IMR-90 (cell line): ENCODE measurements at regions of chr3 and their contacts with region 1.

Region 1: GRCh38 chr3:186540221-186540834 is 3.9 kb downstream of the CRYGS start:
- DNase-seq: peak; percentile 75
- ATAC-seq: peak; percentile 80
- H3K4me3 ChIP-seq: no peak overlapping the region
- H3K27ac ChIP-seq: no peak overlapping the region
- H3K4me1 ChIP-seq: no peaks in the 10 kb centered on the region
- H3K27me3 ChIP-seq: no peaks in the 10 kb centered on the region
- CTCF ChIP-seq: peak; percentile 78
- POLR2A ChIP-seq: 0 out of 2 replicates have a peak, but pooled peaks have one; percentile 33
- RAD21 ChIP-seq: peak; percentile 85

Region 2: DNA sequence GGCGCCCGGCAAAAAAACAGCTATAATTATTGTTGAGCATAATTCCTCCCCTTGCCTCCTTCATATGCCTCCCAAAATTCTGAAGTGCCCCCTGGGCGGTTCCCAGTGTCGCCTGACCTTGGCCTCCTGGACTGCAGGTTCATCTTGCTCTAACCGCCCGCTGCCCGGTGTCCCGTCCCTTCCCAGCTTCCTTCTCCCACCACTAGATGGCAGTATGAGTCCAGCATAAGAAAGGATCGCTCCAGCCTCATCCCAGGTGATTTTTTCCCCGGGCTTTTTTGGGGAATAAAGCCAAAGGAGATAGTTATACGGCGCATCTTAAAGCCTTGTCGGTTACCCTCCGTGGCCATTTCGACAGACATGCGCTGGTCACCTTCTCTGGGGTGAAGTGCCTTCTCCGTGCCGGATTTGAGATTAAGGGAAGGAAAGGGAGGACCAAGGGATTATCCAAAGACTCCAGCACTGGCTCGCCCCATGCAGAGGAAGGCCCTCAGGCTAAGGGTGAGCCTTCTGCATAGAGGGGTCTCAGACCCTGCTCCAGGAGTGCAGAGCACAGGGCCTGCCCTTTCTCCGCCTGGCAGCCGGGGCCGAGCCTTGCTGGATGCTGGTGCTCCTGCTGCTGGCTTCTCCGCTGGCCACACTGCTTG is 556.7 kb before region 1 on chr3:
- CTCF ChIA-PET with region 1: interaction called, 7 read pairs
- POLR2A ChIA-PET with region 1: no interaction called
- dilution Hi-C with region 1: no loop called
- in situ Hi-C with region 1: loop called (anchors 5 kb)
- intact Hi-C with region 1: loop called (anchors 1 kb)
- DNase-seq: peak; percentile 62
- ATAC-seq: peak; percentile 93
- H3K4me3 ChIP-seq: no peak overlapping the region
- H3K27ac ChIP-seq: no peak overlapping the region
- H3K4me1 ChIP-seq: 0 out of 2 replicates have a peak, but pooled peaks cover 2% of the 10 kb centered on the region
- H3K27me3 ChIP-seq: no peaks in the 10 kb centered on the region; the same call in 1 of the 2 replicates
- CTCF ChIP-seq: peak; percentile 91
- POLR2A ChIP-seq: no peak
- RAD21 ChIP-seq: peak; percentile 97

Region 3: GRCh38 chr3:186259612-186260383 is 280.5 kb before region 1 on chr3:
- CTCF ChIA-PET with region 1: interaction called, 17 read pairs
- POLR2A ChIA-PET with region 1: no interaction called
- dilution Hi-C with region 1: no loop called
- in situ Hi-C with region 1: loop called (anchors 5 kb)
- intact Hi-C with region 1: loop called (anchors 1 kb)
- DNase-seq: peak; percentile 73
- ATAC-seq: peak; percentile 99
- H3K4me3 ChIP-seq: peak overlapping the region; percentile 6; the same call in 1 of the 2 replicates
- H3K27ac ChIP-seq: no peak overlapping the region
- H3K4me1 ChIP-seq: no peaks in the 10 kb centered on the region
- H3K27me3 ChIP-seq: peaks cover 14% of the 10 kb centered on the region
- CTCF ChIP-seq: peak; percentile 79
- POLR2A ChIP-seq: no peak
- RAD21 ChIP-seq: peak; percentile 74

Region 4: GRCh38 chr3:186287711-186288110 is 252.6 kb before region 1 on chr3:
- CTCF ChIA-PET with region 1: interaction called, 12 read pairs
- POLR2A ChIA-PET with region 1: no interaction called
- dilution Hi-C with region 1: no loop called
- in situ Hi-C with region 1: no loop called
- intact Hi-C with region 1: no loop called
- DNase-seq: peak; percentile 85
- ATAC-seq: peak; percentile 81
- H3K4me3 ChIP-seq: no peak overlapping the region
- H3K27ac ChIP-seq: no peak overlapping the region
- H3K4me1 ChIP-seq: peaks cover 10% of the 10 kb centered on the region
- H3K27me3 ChIP-seq: peaks cover 7% of the 10 kb centered on the region
- CTCF ChIP-seq: no peak
- POLR2A ChIP-seq: no peak
- RAD21 ChIP-seq: no peak

Region 5: DNA sequence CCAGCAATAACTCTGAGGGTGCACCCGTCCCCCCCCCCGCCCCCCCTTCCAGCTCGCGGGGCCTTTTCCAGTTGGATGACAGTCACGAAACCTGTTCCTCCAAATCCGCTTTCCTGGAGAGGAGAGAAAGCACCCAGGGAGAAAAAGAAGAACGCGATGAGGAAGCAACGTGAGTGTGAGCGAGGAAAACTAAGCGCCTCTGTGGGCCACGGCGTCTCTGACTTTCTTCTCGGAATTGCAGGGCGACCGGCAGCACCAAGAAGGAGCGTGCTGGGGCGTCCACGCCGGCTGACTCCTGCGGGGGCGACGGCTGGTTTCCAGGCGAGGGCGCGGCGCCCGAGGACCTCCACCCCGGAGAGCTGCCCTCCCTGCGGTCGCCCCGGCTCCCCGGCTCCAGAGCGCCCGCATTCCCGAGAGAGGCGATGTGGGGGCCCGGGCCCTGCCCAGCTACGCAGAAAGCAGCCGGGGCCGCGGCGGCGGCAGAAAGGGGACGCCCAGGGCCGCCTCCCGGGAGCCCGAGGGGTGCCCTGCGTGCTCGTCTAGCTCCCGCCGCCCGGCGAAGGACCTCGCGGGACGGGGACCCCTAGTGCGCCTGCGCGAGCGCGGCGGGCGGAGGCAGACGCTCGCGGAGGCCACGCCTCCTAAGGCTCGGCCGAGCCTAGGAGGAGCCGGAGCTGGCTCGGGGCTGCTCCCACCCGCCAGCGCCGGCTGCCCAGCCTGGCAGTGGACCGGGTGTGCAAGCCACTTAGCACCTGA is 286.8 kb after region 1 on chr3:
- CTCF ChIA-PET with region 1: interaction called, 11 read pairs
- POLR2A ChIA-PET with region 1: no interaction called
- dilution Hi-C with region 1: no loop called
- in situ Hi-C with region 1: no loop called
- intact Hi-C with region 1: no loop called
- DNase-seq: peak; percentile 72
- ATAC-seq: peak; percentile 90
- H3K4me3 ChIP-seq: peak overlapping the region; percentile 53
- H3K27ac ChIP-seq: peak overlapping the region; percentile 14; the same call in 1 of the 2 replicates
- H3K4me1 ChIP-seq: peaks cover 13% of the 10 kb centered on the region
- H3K27me3 ChIP-seq: peaks cover 30% of the 10 kb centered on the region
- CTCF ChIP-seq: no peak
- POLR2A ChIP-seq: peak; percentile 34; the same call in 1 of the 2 replicates
- RAD21 ChIP-seq: no peak